ENCODE measurements at regions of chr17 and their contacts with region 1.

Region 1: DNA sequence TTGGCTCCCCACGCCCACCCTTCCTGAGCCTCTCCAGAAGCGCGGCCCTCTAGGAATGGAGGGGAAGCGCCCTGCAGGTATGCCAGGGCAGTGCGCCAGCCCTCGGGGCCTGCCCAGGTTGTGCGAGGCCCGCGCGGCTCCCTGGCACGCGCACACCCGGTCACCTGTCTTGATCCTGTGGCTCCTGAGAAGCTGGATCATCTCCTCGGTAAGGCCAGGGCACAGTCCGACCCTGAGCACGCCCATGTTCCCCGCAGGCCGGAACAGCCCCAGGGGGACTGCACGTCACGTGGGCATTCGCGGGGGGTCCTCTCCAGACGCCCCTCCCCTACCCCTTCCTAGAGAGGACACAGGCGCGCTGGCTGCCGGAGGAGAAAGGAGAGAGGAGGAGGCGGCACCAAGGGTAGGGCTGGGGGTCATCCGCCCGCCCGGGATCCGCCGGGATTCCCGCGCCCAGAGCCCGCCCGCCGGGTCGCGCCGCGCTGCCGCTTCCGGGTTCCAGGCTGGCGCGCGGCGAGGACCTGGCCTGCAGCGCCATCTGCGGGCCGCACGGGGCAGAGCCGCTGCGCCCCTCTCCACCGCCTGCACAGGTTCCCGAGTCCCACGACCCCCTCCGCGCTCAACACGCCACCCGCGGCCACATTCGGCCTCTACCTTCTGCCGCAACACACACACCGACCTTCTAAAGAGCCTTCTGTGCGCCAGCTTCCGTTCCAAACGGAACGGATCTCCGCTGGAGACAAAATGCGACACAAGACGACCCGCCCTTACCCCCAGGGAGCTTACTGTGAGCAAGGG is at the start of gene RAD51D:
- DNase-seq: peak; percentile 83
- ATAC-seq: peak; percentile 90
- H3K4me3 Mint-ChIP-seq: peak within 1 kb of the TSS; percentile 87
- H3K27ac Mint-ChIP-seq: peak within 1 kb of the TSS; percentile 91
- H3K4me1 Mint-ChIP-seq: peaks cover 25% of the 10 kb centered on the region
- H3K27me3 Mint-ChIP-seq: no peaks in the 10 kb centered on the region
- CTCF ChIP-seq: peak; percentile 91
- total RNA-seq, gene RAD51D: 32.4 to 36.2 TPM

Region 2: DNA sequence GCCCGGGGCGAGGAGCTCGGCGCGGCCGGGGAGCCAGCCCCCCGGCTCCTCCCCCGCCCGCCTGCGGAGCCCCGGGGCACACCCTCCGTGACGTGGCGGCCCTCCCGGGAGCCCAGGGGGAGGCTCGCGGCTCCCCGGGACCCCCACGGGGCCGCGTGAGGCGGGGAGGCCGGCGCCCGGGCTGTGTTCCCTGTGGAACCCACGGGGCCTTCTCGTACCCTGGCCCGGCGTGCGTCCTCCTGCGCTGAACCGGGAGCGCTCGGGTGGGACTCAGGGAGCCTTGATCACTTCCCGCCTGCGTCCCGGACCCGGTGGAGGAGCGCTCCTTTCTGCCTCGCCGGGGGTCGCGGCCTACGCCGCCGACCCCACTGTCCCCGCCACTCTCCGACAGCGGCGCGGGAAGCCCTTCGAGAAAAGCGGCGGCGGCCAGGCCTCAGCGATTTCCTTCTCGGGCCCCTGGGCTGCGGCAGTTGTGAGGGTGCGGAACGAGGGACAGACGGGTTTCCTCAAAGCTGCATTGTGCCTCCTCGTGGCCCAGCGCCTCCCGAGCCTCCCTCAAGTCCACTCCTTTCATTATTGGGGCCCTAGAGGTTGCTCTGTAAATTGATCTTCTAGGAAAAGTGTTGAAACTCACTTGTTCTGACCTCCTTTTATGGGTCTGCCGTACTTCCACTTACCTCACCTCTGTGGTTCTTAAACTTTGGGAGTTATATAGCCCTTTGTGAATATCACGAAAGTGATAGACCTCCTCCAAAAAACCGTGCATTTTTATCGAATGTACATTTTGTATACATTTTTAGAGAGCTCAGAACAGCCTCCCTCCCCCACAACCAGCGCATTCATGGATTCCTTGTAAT is 138.7 kb before region 1 on chr17:
- CTCF ChIA-PET with region 1: interaction called, 28 read pairs
- POLR2A ChIA-PET with region 1: interaction called, 20 read pairs
- intact Hi-C with region 1: no loop called
- DNase-seq: peak; percentile 84
- ATAC-seq: peak; percentile 87
- H3K4me3 Mint-ChIP-seq: peak overlapping the region; percentile 94
- H3K27ac Mint-ChIP-seq: peak overlapping the region; percentile 89
- H3K4me1 Mint-ChIP-seq: peaks cover 45% of the 10 kb centered on the region
- H3K27me3 Mint-ChIP-seq: no peaks in the 10 kb centered on the region
- CTCF ChIP-seq: peak; percentile 47

Region 3: GRCh38 chr17:34998205-34998604 is 121.4 kb before region 1 on chr17:
- CTCF ChIA-PET with region 1: interaction called, 59 read pairs
- POLR2A ChIA-PET with region 1: interaction called, 33 read pairs
- intact Hi-C with region 1: loop called (anchors 5 kb)
- DNase-seq: peak; percentile 85
- ATAC-seq: peak; percentile 99
- H3K4me3 Mint-ChIP-seq: no peak overlapping the region
- H3K27ac Mint-ChIP-seq: peak overlapping the region; percentile 60
- H3K4me1 Mint-ChIP-seq: peaks cover 5% of the 10 kb centered on the region
- H3K27me3 Mint-ChIP-seq: no peaks in the 10 kb centered on the region
- CTCF ChIP-seq: peak; percentile 77

Region 4: GRCh38 chr17:35022536-35023063 is 97.0 kb before region 1 on chr17:
- CTCF ChIA-PET with region 1: interaction called, 33 read pairs
- POLR2A ChIA-PET with region 1: interaction called, 4 read pairs
- intact Hi-C with region 1: no loop called
- DNase-seq: peak; percentile 88
- ATAC-seq: peak; percentile 100
- H3K4me3 Mint-ChIP-seq: peak overlapping the region; percentile 74
- H3K27ac Mint-ChIP-seq: peak overlapping the region; percentile 99
- H3K4me1 Mint-ChIP-seq: peaks cover 48% of the 10 kb centered on the region
- H3K27me3 Mint-ChIP-seq: no peaks in the 10 kb centered on the region
- CTCF ChIP-seq: no peak

Region 5: GRCh38 chr17:35094902-35095301 is 24.7 kb before region 1 on chr17:
- CTCF ChIA-PET with region 1: interaction called, 36 read pairs
- POLR2A ChIA-PET with region 1: interaction called, 9 read pairs
- intact Hi-C with region 1: no loop called
- DNase-seq: no peak
- ATAC-seq: peak; percentile 37
- H3K4me3 Mint-ChIP-seq: no peak overlapping the region
- H3K27ac Mint-ChIP-seq: no peak overlapping the region
- H3K4me1 Mint-ChIP-seq: peaks cover 10% of the 10 kb centered on the region
- H3K27me3 Mint-ChIP-seq: no peaks in the 10 kb centered on the region
- CTCF ChIP-seq: no peak

Region 6: GRCh38 chr17:35141681-35142466 is 22.3 kb after region 1 on chr17 and contains the start of gene NLE1:
- CTCF ChIA-PET with region 1: interaction called, 4 read pairs
- POLR2A ChIA-PET with region 1: interaction called, 17 read pairs
- intact Hi-C with region 1: no loop called
- DNase-seq: peak; percentile 90
- ATAC-seq: peak; percentile 95
- H3K4me3 Mint-ChIP-seq: peak within 1 kb of the TSS; percentile 83
- H3K27ac Mint-ChIP-seq: peak within 1 kb of the TSS; percentile 87
- H3K4me1 Mint-ChIP-seq: peaks cover 14% of the 10 kb centered on the region
- H3K27me3 Mint-ChIP-seq: no peaks in the 10 kb centered on the region
- CTCF ChIP-seq: peak; percentile 88
- total RNA-seq, gene NLE1: 49.1 to 49.8 TPM

Region 7: GRCh38 chr17:35189291-35189690 is 69.7 kb after region 1 on chr17:
- CTCF ChIA-PET with region 1: no interaction called
- POLR2A ChIA-PET with region 1: no interaction called
- intact Hi-C with region 1: no loop called
- DNase-seq: no peak
- ATAC-seq: no peak
- H3K4me3 Mint-ChIP-seq: peak overlapping the region; percentile 65
- H3K27ac Mint-ChIP-seq: peak overlapping the region; percentile 76
- H3K4me1 Mint-ChIP-seq: peaks cover 65% of the 10 kb centered on the region
- H3K27me3 Mint-ChIP-seq: no peaks in the 10 kb centered on the region
- CTCF ChIP-seq: no peak

Region 8: GRCh38 chr17:35242805-35243560 is 123.4 kb after region 1 on chr17 and contains the start of gene SLFN5:
- CTCF ChIA-PET with region 1: no interaction called
- POLR2A ChIA-PET with region 1: no interaction called
- intact Hi-C with region 1: no loop called
- DNase-seq: peak; percentile 95
- ATAC-seq: peak; percentile 72
- H3K4me3 Mint-ChIP-seq: peak within 1 kb of the TSS; percentile 93
- H3K27ac Mint-ChIP-seq: peak within 1 kb of the TSS; percentile 97
- H3K4me1 Mint-ChIP-seq: peaks cover 64% of the 10 kb centered on the region
- H3K27me3 Mint-ChIP-seq: no peaks in the 10 kb centered on the region
- CTCF ChIP-seq: no peak
- total RNA-seq, gene SLFN5: 29.1 to 32.7 TPM

Measured in activated CD8-positive, alpha-beta T cell treated with anti-CD3 and anti-CD28 coated beads for 36 hours (primary cell).